ENCODE measurements at regions of chr7 and their contacts with region 1.

Region 1: GRCh38 chr7:103296901-103297836 is at the start of gene PMPCB:
- DNase-seq: peak; percentile 83
- ATAC-seq: peak; percentile 96
- H3K4me3 ChIP-seq: peak within 1 kb of the TSS; percentile 81 to 85
- H3K27ac ChIP-seq: peak within 1 kb of the TSS; percentile 83
- H3K4me1 ChIP-seq: peaks cover 16% of the 10 kb centered on the region
- H3K27me3 ChIP-seq: no peaks in the 10 kb centered on the region; the same call in 1 of the 2 replicates
- CTCF ChIP-seq: peak; percentile 97
- total RNA-seq, gene PMPCB: 61.1 TPM

Region 2: GRCh38 chr7:103412151-103412550 is 115.0 kb after region 1 on chr7:
- CTCF ChIA-PET with region 1: no interaction called
- POLR2A ChIA-PET with region 1: no interaction called
- in situ Hi-C with region 1: no loop called
- intact Hi-C with region 1: loop called (anchors 1 kb)
- DNase-seq: no peak
- ATAC-seq: no peak
- H3K4me3 ChIP-seq: no peak overlapping the region
- H3K27ac ChIP-seq: no peak overlapping the region
- H3K4me1 ChIP-seq: no peaks in the 10 kb centered on the region
- H3K27me3 ChIP-seq: peaks cover 3% of the 10 kb centered on the region; the same call in 1 of the 2 replicates
- CTCF ChIP-seq: no peak